AG04450 (cell line): ENCODE measurements at regions of chr5 and their contacts with region 1.

Region 1: GRCh38 chr5:81301271-81302015 is at the start of gene ZCCHC9:
- DNase-seq: peak; percentile 84
- H3K4me3 ChIP-seq: peak within 1 kb of the TSS; percentile 99
- H3K27ac ChIP-seq: peak within 1 kb of the TSS; percentile 97
- H3K27me3 ChIP-seq: no peaks in the 10 kb centered on the region
- CTCF ChIP-seq: peak; percentile 39
- polyA plus RNA-seq, gene ZCCHC9: 23.3 and 35.4 TPM in 2 replicates

Region 2: GRCh38 chr5:81233080-81233634 is 68.3 kb before region 1 on chr5 and contains the start of gene CKMT2:
- CTCF ChIA-PET with region 1: interaction called, 16 read pairs
- POLR2A ChIA-PET with region 1: no interaction called
- DNase-seq: no peak
- H3K4me3 ChIP-seq: peak within 1 kb of the TSS; percentile 34
- H3K27ac ChIP-seq: no peak within 1 kb of the TSS
- H3K27me3 ChIP-seq: no peaks in the 10 kb centered on the region
- CTCF ChIP-seq: no peak
- polyA plus RNA-seq, gene CKMT2: 0.11 and 0.24 TPM in 2 replicates

Region 3: GRCh38 chr5:81288021-81288433 is 13.4 kb before region 1 on chr5:
- CTCF ChIA-PET with region 1: interaction called, 32 read pairs
- POLR2A ChIA-PET with region 1: no interaction called
- DNase-seq: no peak
- H3K4me3 ChIP-seq: no peak overlapping the region
- H3K27ac ChIP-seq: no peak overlapping the region
- H3K27me3 ChIP-seq: no peaks in the 10 kb centered on the region
- CTCF ChIP-seq: no peak

Region 4: DNA sequence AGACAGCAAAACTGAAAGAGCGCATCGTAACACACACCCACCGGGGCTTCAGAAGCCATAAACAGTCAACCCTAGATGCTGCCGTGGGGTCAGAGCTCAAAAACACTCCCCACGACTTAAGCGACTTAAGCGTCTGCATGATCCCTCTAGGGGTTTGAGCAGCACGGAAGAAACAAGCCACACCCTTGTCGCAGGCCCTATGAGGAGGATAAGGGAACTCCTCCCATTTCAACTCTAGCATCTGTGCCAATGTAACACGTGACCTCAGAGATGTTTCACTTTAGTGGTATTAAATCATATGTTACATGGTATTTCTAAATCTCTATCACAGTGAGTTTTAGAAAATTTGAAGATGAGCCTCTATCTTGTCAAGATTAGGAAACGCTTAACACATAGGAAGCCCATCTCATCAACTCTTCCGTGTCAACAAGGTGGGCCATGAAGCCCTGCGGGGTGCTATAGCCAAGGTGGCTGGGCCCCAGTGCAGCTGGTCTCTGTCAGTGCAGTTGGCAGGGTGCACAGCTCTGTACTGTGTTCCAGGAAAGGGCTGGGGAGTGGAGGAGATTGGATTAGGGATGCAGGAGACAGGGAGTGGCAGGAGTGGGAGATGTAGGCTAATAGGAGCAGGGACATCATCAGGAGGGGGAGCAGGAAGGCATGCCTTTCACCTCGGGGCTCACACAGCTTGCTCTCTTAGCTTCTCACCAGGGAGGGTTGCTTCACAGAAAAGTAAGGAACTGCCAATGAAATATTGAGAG is 33.0 kb after region 1 on chr5:
- CTCF ChIA-PET with region 1: interaction called, 10 read pairs
- POLR2A ChIA-PET with region 1: no interaction called
- DNase-seq: no peak
- H3K4me3 ChIP-seq: no peak overlapping the region
- H3K27ac ChIP-seq: no peak overlapping the region
- H3K27me3 ChIP-seq: peaks cover 3% of the 10 kb centered on the region
- CTCF ChIP-seq: no peak

Region 5: GRCh38 chr5:81851481-81852178 is 550.2 kb after region 1 on chr5:
- CTCF ChIA-PET with region 1: no interaction called
- POLR2A ChIA-PET with region 1: interaction called, 16 read pairs
- DNase-seq: peak; percentile 88
- H3K4me3 ChIP-seq: peak overlapping the region; percentile 60
- H3K27ac ChIP-seq: peak overlapping the region; percentile 94
- H3K27me3 ChIP-seq: no peaks in the 10 kb centered on the region
- CTCF ChIP-seq: no peak